Thyroid gland (tissue), 4 donors: ENCODE measurements at regions of chr2 and their contacts with region 1.

Region 1: GRCh38 chr2:10668402-10669012 is 21.3 kb downstream of the NOL10 start:
- DNase-seq: peak in 1 of 2 donors; percentile 4
- H3K4me3 ChIP-seq: no peak overlapping the region
- H3K27ac ChIP-seq: no peak overlapping the region
- H3K4me1 ChIP-seq: no peaks in the 10 kb centered on the region
- H3K27me3 ChIP-seq: no peaks in the 10 kb centered on the region
- CTCF ChIP-seq: peak in 5 of 6 experiments; percentile 54 to 78 (median 69)
- POLR2A ChIP-seq: no peak

Region 2: DNA sequence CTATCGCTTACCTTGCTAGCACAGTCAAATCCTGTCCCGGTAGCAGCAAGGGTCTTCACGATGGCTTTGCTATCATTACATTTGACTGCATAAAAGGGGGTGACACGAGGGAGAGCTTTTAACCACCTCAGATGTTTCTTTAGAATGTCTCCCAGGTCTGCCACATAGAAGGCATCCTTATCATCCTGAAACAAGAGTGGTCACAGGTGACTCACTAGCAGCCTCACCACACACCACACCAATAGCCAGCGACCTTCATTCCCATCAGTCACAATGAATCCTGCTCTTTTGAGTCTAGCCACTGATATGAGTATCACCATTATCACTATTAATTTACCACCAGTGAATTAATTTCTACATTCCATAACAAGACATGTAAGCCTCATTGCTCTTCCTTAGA is 224.0 kb before region 1 on chr2:
- intact Hi-C with region 1: loop called (anchors 5 kb)
- DNase-seq: no peak
- H3K4me3 ChIP-seq: no peak overlapping the region
- H3K27ac ChIP-seq: no peak overlapping the region
- H3K4me1 ChIP-seq: peaks cover 21 to 34% of the 10 kb centered on the region in 2 donors
- H3K27me3 ChIP-seq: no peaks in the 10 kb centered on the region
- CTCF ChIP-seq: no peak
- POLR2A ChIP-seq: no peak